BJ (cell line): ENCODE measurements at regions of chr20 and their contacts with region 1.

Region 1: GRCh38 chr20:34312544-34313217 is 9.5 kb upstream of the AHCY start:
- DNase-seq: no peak
- H3K4me3 ChIP-seq: peak overlapping the region; percentile 3; the same call in 1 of the 2 replicates
- H3K27me3 ChIP-seq: no peaks in the 10 kb centered on the region
- CTCF ChIP-seq: peak; percentile 100

Region 2: DNA sequence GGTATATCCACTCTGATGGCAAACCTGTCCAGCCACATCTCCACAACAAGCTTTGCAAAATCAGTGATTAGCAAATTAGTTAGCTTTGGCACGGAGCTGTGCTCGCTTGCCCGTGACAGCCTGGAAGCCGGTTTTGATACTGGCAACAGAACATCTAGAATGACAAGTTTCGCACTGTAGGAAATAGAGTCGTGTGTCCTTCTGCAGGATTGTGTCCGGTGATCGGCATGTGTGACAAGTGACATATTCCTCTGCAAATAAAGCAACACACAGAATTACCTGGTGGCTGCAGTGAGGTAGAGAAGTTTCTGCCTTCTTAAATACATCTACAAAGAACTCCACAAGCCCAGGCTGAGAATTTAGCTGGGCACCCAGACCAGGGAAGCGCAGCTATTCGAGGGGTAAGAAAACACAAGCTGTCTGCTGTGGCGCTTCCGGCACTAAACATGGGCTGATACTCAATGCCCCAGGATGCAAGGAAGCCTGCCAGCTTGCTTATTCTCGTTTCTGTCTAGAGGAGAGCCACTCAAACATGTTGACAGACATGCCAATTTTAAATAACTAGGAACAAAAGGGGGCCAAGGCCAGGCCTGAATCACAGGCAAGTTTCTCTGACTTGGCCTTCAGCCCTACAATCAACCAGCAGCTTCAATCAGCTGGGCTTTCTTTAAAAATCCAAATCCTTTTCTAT is 222.9 kb before region 1 on chr20:
- CTCF ChIA-PET with region 1: no interaction called
- POLR2A ChIA-PET with region 1: no interaction called
- DNase-seq: no peak
- H3K4me3 ChIP-seq: no peak overlapping the region
- H3K27me3 ChIP-seq: no peaks in the 10 kb centered on the region
- CTCF ChIP-seq: no peak

Region 3: GRCh38 chr20:34392072-34392471 is 79.4 kb after region 1 on chr20:
- CTCF ChIA-PET with region 1: no interaction called
- POLR2A ChIA-PET with region 1: no interaction called
- DNase-seq: no peak
- H3K4me3 ChIP-seq: no peak overlapping the region
- H3K27me3 ChIP-seq: no peaks in the 10 kb centered on the region
- CTCF ChIP-seq: no peak

Region 4: DNA sequence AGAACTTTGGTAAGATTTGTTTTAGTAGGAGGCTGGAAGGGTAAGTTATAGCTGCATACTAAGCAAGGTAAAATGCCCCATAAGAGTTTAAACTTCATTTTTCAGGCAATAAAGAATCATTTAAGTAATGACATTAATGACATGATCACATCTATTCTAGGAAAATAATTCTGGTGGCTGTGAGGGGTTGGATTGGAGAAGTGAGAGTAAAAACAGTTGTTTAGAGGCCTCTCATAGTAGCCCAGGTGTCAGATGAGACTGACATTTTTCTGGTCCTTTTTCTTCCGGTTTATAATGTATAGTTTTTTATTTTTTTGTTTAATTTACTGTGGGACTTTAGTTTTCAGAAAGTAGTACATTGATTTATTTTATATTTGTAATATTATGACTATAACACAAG is 91.2 kb after region 1 on chr20:
- CTCF ChIA-PET with region 1: interaction called, 17 read pairs
- POLR2A ChIA-PET with region 1: no interaction called
- DNase-seq: no peak
- H3K4me3 ChIP-seq: no peak overlapping the region
- H3K27me3 ChIP-seq: no peaks in the 10 kb centered on the region
- CTCF ChIP-seq: no peak

Region 5: DNA sequence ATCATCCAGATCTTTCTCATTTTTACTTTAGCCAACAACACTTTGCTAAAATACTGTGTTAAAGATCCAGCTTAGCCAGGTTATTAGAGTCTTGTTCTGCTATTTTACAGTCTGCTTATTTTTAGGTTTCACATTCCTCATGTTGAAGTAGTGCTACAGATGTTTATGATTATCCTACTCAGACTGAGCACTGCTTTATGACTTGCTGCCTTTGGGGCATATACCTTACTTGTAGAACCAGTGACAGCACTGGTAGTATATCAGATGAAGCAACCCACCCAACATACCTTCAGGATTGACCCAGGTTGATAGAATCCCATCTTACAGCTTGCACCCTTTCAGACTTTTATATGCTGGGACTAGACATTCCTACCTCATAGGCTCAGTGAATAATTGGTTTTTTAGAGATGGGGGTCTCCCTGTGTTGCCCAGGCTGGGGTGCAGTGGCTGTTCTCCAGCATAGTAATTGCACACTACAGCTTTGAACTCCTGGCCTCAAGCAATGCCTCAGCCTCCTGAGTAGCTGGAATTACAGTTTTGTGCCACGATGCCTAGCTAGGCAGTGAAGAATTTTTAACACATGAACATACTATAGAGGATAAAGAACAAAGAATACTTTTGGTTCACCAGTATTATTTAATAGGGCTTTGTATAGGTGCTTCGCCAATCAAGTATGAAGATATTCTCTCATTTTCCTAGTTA is 139.8 kb after region 1 on chr20:
- CTCF ChIA-PET with region 1: interaction called, 13 read pairs
- POLR2A ChIA-PET with region 1: no interaction called
- DNase-seq: peak; percentile 57
- H3K4me3 ChIP-seq: no peak overlapping the region
- H3K27me3 ChIP-seq: no peaks in the 10 kb centered on the region
- CTCF ChIP-seq: no peak

Region 6: GRCh38 chr20:34479627-34480026 is 166.9 kb after region 1 on chr20:
- CTCF ChIA-PET with region 1: interaction called, 39 read pairs
- POLR2A ChIA-PET with region 1: no interaction called
- DNase-seq: no peak
- H3K4me3 ChIP-seq: no peak overlapping the region
- H3K27me3 ChIP-seq: no peaks in the 10 kb centered on the region
- CTCF ChIP-seq: no peak

Region 7: DNA sequence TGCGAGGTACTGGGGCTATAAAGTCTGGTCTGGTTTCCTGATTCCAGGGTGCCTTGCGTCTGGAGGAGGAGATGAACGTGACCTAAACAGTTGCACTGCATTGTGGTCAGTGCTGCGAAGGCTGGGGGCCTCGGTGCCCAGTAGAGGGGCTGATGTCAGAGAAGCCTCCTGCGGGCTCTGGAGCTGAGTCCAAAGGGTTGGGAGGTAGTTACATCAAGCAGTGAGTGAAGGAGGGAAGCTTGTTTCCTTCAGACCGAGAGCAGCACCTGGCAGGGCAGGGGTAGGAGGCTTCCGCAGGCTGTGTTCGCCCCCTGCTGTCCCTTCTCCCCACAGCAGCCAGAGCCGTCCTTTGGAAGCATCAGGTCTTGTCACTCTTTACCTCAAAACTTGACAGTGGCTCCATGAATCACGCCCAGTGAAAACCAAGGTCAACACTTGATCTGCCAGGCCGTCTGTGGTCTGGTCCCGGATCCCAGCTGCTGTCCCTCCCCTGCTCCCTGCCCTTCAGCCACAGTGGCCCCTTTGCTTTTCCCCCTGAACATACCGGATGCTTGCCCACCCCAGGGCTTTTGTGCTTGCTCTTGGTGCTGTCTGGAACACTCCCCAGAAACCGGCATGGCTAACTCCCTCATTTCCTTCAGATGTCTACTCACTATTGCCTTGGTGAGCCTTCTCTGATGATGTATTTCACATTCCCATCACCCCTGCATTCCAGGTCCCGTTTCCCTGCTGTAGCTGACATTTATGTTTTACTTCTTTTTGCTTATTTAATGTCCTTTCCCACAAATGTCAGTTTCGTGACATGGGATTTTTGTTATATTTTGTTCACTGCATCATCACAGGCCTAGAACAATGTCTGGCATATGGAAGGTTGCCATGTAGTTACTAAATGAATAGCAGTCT is 210.5 kb after region 1 on chr20:
- CTCF ChIA-PET with region 1: interaction called, 63 read pairs
- POLR2A ChIA-PET with region 1: no interaction called
- DNase-seq: no peak
- H3K4me3 ChIP-seq: no peak overlapping the region
- H3K27me3 ChIP-seq: no peaks in the 10 kb centered on the region
- CTCF ChIP-seq: peak; percentile 63

Region 8: GRCh38 chr20:34768096-34768495 is 455.4 kb after region 1 on chr20:
- CTCF ChIA-PET with region 1: interaction called, 36 read pairs
- POLR2A ChIA-PET with region 1: no interaction called
- DNase-seq: peak; percentile 62
- H3K4me3 ChIP-seq: no peak overlapping the region
- H3K27me3 ChIP-seq: no peaks in the 10 kb centered on the region
- CTCF ChIP-seq: no peak